Activated T-helper 2 cell treated with anti-CD3 and anti-CD28 coated beads, Interferon-gamma antibody, Interleukin-2, Interleukin-4, amounts not matched to agents 10 μg/mL and 5 μg/mL and 100 μg/mL, durations not matched to agents 14 hours and 24 hours and 36 hours (primary cell): ENCODE measurements at regions of chr7 and their contacts with region 1.

Region 1: DNA sequence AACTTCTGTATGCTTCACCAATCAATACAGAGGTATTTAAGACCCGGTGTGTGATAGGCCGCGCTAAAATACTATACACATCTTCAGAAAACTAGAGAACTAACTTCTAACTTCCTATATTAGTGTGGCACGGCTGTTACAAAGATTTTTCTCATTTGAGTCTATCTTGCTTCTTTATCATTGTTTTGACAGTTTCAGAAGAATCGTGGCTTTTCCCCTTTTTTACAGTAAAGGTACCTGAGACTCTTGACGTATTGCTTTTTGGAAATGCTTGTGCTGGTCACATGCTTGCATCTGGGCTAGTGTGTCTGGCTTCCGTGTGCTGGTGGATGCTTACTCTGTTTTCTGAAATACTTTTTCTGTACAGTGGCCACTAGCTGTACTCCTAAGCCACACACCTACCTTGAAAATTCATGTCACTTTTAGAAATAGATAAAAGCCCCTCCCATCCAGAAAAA is 12.7 kb downstream of the IKZF1 start:
- DNase-seq: peak; percentile 52
- H3K4me3 Mint-ChIP-seq: peak overlapping the region; percentile 78
- H3K27ac Mint-ChIP-seq: peak overlapping the region; percentile 92
- H3K4me1 Mint-ChIP-seq: peaks cover 90% of the 10 kb centered on the region
- H3K27me3 Mint-ChIP-seq: no peaks in the 10 kb centered on the region

Region 2: DNA sequence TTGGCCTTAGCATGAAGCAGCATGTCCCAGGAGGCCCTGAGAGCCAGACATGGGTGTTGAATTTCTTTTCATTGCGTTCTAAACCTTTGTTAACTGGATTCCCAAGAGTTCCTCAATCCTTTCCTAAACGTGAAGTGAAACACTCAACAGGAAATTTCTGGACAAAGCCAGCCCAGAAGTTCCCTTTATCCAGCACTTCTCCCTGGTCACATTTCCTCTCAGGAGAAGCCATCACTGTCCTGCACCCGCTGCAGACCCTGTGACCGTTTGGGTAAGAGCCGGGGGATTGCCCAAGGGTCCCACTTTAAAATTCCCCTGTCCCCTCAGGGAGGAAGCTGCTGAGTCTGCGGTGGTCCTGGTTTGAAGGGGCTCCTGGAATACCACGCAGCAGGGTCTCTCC is 136.2 kb before region 1 on chr7:
- intact Hi-C with region 1: no loop called
- DNase-seq: no peak
- H3K4me3 Mint-ChIP-seq: no peak overlapping the region
- H3K27ac Mint-ChIP-seq: no peak overlapping the region
- H3K4me1 Mint-ChIP-seq: peaks cover 9% of the 10 kb centered on the region
- H3K27me3 Mint-ChIP-seq: peaks cover 13% of the 10 kb centered on the region

Region 3: DNA sequence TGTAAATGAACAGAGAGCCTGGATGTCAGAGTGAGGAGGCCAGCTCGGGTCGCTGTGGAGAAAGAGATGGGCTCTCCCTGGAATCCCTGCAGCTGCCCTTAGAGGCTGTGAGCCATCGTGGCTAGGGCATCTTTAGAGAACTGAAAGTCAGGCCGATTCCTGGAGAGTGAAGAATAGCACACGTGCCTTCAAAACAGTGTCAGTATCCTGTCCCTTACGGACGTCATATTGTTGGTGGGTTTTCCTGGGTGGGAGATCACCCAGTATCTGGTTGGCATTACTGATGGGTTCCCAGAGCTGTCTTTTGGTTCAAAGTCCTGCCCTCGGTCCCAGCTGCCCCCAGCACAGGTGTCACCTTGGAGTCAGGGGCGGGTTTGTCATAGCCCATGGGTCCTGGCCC is 12.5 kb after region 1 on chr7:
- intact Hi-C with region 1: loop called (anchors 1 kb)
- DNase-seq: no peak
- H3K4me3 Mint-ChIP-seq: no peak overlapping the region
- H3K27ac Mint-ChIP-seq: peak overlapping the region; percentile 83
- H3K4me1 Mint-ChIP-seq: peaks cover 70% of the 10 kb centered on the region
- H3K27me3 Mint-ChIP-seq: no peaks in the 10 kb centered on the region